ENCODE measurements at regions of chr22 and their contacts with region 1.

Region 1: GRCh38 chr22:18024276-18024947 is at the start of gene MICAL3:
- DNase-seq: peak; percentile 88
- ATAC-seq: peak; percentile 95
- H3K4me3 ChIP-seq: peak within 1 kb of the TSS; percentile 61 to 80 (median 76)
- H3K4me3 Mint-ChIP-seq: peak within 1 kb of the TSS; percentile 98
- H3K27ac ChIP-seq: peak within 1 kb of the TSS in 1 of 2 donors; percentile 53
- H3K27ac Mint-ChIP-seq: peak within 1 kb of the TSS; percentile 86
- H3K4me1 ChIP-seq: peaks cover 13 to 23% of the 10 kb centered on the region in 2 donors
- H3K4me1 Mint-ChIP-seq: peaks cover 22% of the 10 kb centered on the region
- H3K27me3 ChIP-seq: no peaks in the 10 kb centered on the region
- H3K27me3 Mint-ChIP-seq: no peaks in the 10 kb centered on the region
- CTCF ChIP-seq: peak; percentile 85
- total RNA-seq, gene MICAL3: 253 and 261 TPM in 2 replicates

Region 2: GRCh38 chr22:17920145-17920605 is 104.2 kb before region 1 on chr22:
- CTCF ChIA-PET with region 1: interaction called, 15 read pairs
- POLR2A ChIA-PET with region 1: no interaction called
- intact Hi-C with region 1: loop called (anchors 1 kb)
- DNase-seq: peak; percentile 54
- ATAC-seq: peak; percentile 47
- H3K4me3 ChIP-seq: no peak overlapping the region
- H3K4me3 Mint-ChIP-seq: peak overlapping the region; percentile 62
- H3K27ac ChIP-seq: peak overlapping the region in 1 of 2 donors; percentile 78
- H3K27ac Mint-ChIP-seq: peak overlapping the region; percentile 78
- H3K4me1 ChIP-seq: peaks cover 85 to 95% of the 10 kb centered on the region in 2 donors
- H3K4me1 Mint-ChIP-seq: peaks cover 5% of the 10 kb centered on the region
- H3K27me3 ChIP-seq: no peaks in the 10 kb centered on the region
- H3K27me3 Mint-ChIP-seq: no peaks in the 10 kb centered on the region
- CTCF ChIP-seq: peak; percentile 35

Region 3: DNA sequence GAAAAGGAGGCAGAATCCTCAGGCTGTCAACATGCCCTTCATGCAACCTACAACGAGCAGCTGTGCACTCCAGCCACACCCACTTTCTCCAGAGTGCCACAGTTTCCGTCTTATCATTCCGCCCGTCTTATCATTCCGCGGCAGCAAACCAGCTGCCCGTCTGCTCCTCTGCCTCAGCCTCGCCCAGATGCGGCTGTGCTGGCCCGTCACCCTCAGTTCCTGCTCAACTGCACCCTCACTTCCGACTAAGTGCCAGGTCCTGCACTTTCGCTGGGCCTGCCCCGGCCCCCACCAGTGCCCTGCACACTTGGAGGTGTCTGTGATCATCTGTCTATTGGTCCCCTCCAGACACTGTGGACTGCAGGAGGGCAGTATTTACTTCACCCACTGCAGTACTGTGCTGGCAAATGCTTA is 43.8 kb before region 1 on chr22:
- CTCF ChIA-PET with region 1: interaction called, 11 read pairs
- POLR2A ChIA-PET with region 1: no interaction called
- intact Hi-C with region 1: loop called (anchors 1 kb)
- DNase-seq: peak; percentile 66
- ATAC-seq: peak; percentile 79
- H3K4me3 ChIP-seq: peak overlapping the region in 2 of 5 experiments; percentile 19 to 48
- H3K4me3 Mint-ChIP-seq: peak overlapping the region; percentile 86
- H3K27ac ChIP-seq: peak overlapping the region; percentile 63 to 82
- H3K27ac Mint-ChIP-seq: peak overlapping the region; percentile 95
- H3K4me1 ChIP-seq: peaks cover 58 to 82% of the 10 kb centered on the region in 2 donors
- H3K4me1 Mint-ChIP-seq: peaks cover 74% of the 10 kb centered on the region
- H3K27me3 ChIP-seq: no peaks in the 10 kb centered on the region
- H3K27me3 Mint-ChIP-seq: no peaks in the 10 kb centered on the region
- CTCF ChIP-seq: no peak

Region 4: GRCh38 chr22:18012531-18012930 is 11.9 kb before region 1 on chr22:
- CTCF ChIA-PET with region 1: interaction called, 12 read pairs
- POLR2A ChIA-PET with region 1: interaction called, 5 read pairs
- intact Hi-C with region 1: loop called (anchors 2 kb)
- DNase-seq: no peak
- ATAC-seq: no peak
- H3K4me3 ChIP-seq: no peak overlapping the region
- H3K4me3 Mint-ChIP-seq: no peak overlapping the region
- H3K27ac ChIP-seq: no peak overlapping the region
- H3K27ac Mint-ChIP-seq: peak overlapping the region; percentile 41
- H3K4me1 ChIP-seq: peaks cover 22 to 28% of the 10 kb centered on the region in 2 donors
- H3K4me1 Mint-ChIP-seq: peaks cover 36% of the 10 kb centered on the region
- H3K27me3 ChIP-seq: no peaks in the 10 kb centered on the region
- H3K27me3 Mint-ChIP-seq: no peaks in the 10 kb centered on the region
- CTCF ChIP-seq: no peak

Measured in B cell (primary cell).